ENCODE measurements at regions of chr17 and their contacts with region 1.

Region 1: GRCh38 chr17:4948931-4949320 is 596 bp upstream of the PFN1 start:
- DNase-seq: peak; percentile 60
- H3K4me3 ChIP-seq: peak overlapping the region; percentile 92
- H3K27me3 ChIP-seq: no peaks in the 10 kb centered on the region
- CTCF ChIP-seq: no peak

Region 2: GRCh38 chr17:4920351-4921048 is 28.4 kb before region 1 on chr17:
- CTCF ChIA-PET with region 1: no interaction called
- POLR2A ChIA-PET with region 1: no interaction called
- DNase-seq: no peak
- H3K4me3 ChIP-seq: no peak overlapping the region
- H3K27me3 ChIP-seq: no peaks in the 10 kb centered on the region
- CTCF ChIP-seq: no peak

Region 3: DNA sequence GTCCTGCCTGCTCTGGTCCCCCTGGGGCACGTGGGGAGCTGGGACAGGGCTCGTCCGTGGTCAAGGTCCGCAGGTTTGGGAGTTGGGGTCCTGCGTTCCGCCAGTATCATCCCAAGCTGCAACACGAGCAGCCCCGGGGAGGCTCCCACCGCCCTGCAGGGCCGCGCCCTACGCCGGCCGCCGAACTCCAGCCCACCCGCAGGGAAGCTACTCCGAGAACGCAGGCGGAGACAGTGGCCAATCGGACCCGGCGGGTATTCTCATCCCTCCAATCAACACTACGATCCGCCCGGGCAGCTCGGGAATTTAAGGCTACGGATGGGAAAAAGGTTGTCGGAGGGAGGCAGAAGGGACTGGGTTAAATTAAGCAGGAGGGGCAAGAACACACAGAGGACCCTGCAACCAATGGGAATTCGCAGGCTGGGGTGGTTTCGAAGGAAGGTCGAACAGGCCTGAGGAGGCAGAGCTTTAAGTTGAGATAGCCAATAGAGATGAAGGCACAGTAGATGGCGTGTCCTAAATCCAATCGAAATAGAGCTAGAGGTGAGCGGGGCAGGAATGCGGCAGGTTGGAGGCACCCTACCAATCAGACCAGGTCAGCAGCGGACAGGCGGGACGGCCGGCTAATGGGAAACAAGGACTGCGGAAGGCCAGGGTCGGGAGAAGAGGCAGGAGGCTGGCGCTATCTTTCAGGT is 18.1 kb after region 1 on chr17:
- CTCF ChIA-PET with region 1: interaction called, 8 read pairs
- POLR2A ChIA-PET with region 1: interaction called, 17 read pairs
- DNase-seq: peak; percentile 99
- H3K4me3 ChIP-seq: peak overlapping the region; percentile 56
- H3K27me3 ChIP-seq: no peaks in the 10 kb centered on the region
- CTCF ChIP-seq: no peak

Measured in BJ (cell line).